Activated CD4-positive, alpha-beta T cell treated with anti-CD3 and anti-CD28 coated beads, Interleukin-2, amount 10 ng/mL, durations not matched to agents 24 days and 14 days (primary cell): ENCODE measurements at regions of chr7 and their contacts with region 1.

Region 1: DNA sequence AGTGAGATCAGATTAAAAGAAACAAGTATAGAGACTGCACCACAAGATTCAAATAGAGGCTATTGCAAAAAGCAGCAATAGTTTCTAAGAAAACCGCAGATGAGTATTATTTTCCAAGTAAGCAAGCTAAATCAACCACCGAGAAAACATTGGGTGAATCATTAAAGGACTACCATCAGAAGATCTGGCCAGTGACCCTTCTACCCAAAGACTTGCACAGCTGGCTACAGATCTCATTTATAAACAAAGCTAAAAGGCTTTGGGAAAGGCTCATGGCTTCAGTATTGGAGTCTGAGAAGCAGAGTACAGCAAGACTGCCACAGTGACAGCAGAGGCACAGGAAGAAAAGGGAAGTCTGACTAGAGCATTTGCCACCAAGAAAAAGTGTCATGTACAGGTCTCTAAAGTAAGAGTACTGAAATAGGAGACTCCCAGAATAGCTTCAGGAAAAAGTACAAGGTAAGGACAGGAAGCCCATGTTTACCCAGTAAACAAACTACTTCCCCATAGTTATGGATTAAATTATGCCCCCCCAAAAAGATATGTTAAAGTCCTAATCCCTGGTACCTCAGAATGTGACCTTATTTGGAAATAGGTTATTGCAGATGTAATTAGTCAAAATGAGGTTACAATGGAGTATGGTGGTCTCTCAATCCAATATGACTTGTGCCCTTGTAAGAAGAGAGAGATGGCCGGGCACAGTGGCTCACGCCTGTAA is 19.0 kb downstream of the STEAP1 start:
- DNase-seq: no peak
- H3K4me3 Mint-ChIP-seq: no peak overlapping the region
- H3K27ac Mint-ChIP-seq: peak overlapping the region; percentile 48
- H3K4me1 Mint-ChIP-seq: peaks cover 7% of the 10 kb centered on the region
- H3K27me3 Mint-ChIP-seq: peaks cover 6% of the 10 kb centered on the region

Region 2: DNA sequence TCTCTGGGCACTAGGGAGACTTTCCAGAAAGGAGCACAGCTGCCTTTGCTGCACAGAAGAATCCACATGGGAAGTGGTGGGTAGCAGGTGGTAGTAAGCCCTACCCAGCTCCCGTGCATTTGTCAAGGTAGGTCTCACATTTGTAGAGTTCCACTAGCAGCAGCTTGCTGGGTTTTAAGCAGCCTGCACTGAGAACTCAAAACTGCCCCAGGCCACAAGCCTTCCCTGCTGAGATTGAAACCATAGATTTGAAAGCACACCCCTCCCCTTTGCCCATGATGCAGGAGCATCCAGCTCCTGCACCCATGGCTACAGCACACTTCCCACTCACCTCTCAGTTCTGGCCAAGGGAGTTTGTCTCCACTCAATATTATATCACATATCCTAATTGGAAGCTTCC is 623.5 kb before region 1 on chr7:
- intact Hi-C with region 1: no loop called
- DNase-seq: no peak
- H3K4me3 Mint-ChIP-seq: no peak overlapping the region
- H3K27ac Mint-ChIP-seq: no peak overlapping the region
- H3K4me1 Mint-ChIP-seq: no peaks in the 10 kb centered on the region
- H3K27me3 Mint-ChIP-seq: no peaks in the 10 kb centered on the region

Region 3: GRCh38 chr7:90188281-90188680 is 15.0 kb after region 1 on chr7:
- intact Hi-C with region 1: no loop called
- DNase-seq: no peak
- H3K4me3 Mint-ChIP-seq: no peak overlapping the region
- H3K27ac Mint-ChIP-seq: no peak overlapping the region
- H3K4me1 Mint-ChIP-seq: no peaks in the 10 kb centered on the region
- H3K27me3 Mint-ChIP-seq: no peaks in the 10 kb centered on the region

Region 4: DNA sequence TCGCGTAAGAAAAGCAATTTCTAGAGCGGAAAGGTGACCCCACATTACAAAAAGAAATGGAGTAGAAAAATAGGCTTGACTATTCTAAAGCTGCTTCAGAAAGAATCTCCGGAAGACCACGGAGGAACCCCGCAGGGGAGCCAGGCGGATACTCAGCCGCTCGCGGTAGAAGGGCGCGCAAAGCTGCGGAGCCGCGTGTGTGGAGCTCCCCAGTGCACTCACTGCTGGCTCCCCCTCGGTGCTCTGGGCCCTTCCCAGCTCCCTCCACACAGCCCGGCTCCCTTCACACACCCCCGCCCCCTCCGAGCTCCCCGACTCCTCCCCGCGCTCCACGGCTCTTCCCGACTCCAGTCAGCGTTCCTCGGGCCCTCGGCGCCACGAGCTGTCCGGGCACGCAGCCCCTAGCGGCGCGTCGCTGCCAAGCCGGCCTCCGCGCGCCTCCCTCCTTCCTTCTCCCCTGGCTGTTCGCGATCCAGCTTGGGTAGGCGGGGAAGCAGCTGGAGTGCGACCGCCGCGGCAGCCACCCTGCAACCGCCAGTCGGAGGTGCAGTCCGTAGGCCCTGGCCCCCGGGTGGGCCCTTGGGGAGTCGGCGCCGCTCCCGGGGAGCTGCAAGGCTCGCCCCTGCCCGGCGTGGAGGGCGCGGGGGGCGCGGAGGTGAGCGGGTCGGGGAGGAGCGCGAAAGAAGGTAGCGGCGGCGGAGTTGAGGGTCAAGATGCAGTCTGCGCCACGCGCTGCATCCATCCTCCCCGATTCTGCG is 38.3 kb after region 1 on chr7 and contains the start of gene STEAP2:
- intact Hi-C with region 1: loop called (anchors 5 kb)
- DNase-seq: peak; percentile 73
- H3K4me3 Mint-ChIP-seq: peak within 1 kb of the TSS; percentile 50
- H3K27ac Mint-ChIP-seq: no peak within 1 kb of the TSS
- H3K4me1 Mint-ChIP-seq: peaks cover 4% of the 10 kb centered on the region
- H3K27me3 Mint-ChIP-seq: peaks cover 25% of the 10 kb centered on the region
- total RNA-seq, gene STEAP2: 0.02 TPM in 1 of 2 replicates, not detected in the other